Panc1 (cell line): ENCODE measurements at regions of chr11 and their contacts with region 1.

Region 1: GRCh38 chr11:10808553-10809372 is at the start of gene EIF4G2:
- DNase-seq: peak; percentile 99
- ATAC-seq: peak; percentile 96
- H3K4me3 ChIP-seq: peak within 1 kb of the TSS; percentile 83 to 86
- H3K27ac ChIP-seq: peak within 1 kb of the TSS; percentile 96
- H3K4me1 ChIP-seq: peaks cover 35% of the 10 kb centered on the region
- H3K27me3 ChIP-seq: no peaks in the 10 kb centered on the region
- CTCF ChIP-seq: no peak
- total RNA-seq, gene EIF4G2: 2,422 TPM

Region 2: DNA sequence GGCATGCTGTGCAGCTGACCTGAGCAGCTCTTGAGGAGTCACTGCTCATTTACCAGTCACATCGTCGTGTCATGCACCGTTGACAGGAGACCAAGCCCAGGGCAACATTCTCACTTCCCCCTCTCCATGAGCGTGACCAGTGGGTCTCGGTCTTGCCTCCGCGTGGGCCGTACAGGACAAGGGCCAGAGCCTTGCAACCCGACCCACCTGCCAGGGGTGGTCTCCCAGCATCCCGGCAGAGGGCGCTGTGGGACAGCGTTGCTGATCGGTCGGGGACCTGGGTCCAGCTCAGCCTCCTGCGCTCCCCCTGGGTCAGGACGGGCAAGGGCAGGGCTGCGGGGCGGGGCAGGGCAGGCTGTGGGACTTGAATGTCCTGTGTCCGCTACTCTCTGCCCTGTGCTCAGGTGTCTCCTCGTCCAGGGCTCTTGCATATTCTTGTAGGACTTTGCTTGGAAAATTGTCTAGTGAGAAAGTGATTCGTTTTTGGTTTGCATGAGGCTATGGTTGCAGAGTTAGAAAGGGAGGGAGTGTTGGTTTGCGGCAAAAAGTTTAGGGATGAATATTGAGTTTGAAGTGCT is 16.3 kb before region 1 on chr11:
- CTCF ChIA-PET with region 1: interaction called, 17 read pairs
- POLR2A ChIA-PET with region 1: interaction called, 4 read pairs
- in situ Hi-C with region 1: no loop called
- intact Hi-C with region 1: no loop called
- DNase-seq: no peak
- ATAC-seq: peak; percentile 95
- H3K4me3 ChIP-seq: peak overlapping the region in 1 of 2 experiments; percentile 40; a peak in 2 of 4 replicates
- H3K27ac ChIP-seq: peak overlapping the region; percentile 46; the same call in 1 of the 2 replicates
- H3K4me1 ChIP-seq: peaks cover 20% of the 10 kb centered on the region
- H3K27me3 ChIP-seq: no peaks in the 10 kb centered on the region
- CTCF ChIP-seq: peak; percentile 100

Region 3: GRCh38 chr11:10857709-10858438 is 49.1 kb after region 1 on chr11 and contains the start of gene ZBED5:
- CTCF ChIA-PET with region 1: interaction called, 3 read pairs
- POLR2A ChIA-PET with region 1: interaction called, 32 read pairs
- in situ Hi-C with region 1: no loop called
- intact Hi-C with region 1: loop called (anchors 5 kb)
- DNase-seq: peak; percentile 98
- ATAC-seq: peak; percentile 95
- H3K4me3 ChIP-seq: peak within 1 kb of the TSS; percentile 87 to 91
- H3K27ac ChIP-seq: peak within 1 kb of the TSS; percentile 100
- H3K4me1 ChIP-seq: peaks cover 44% of the 10 kb centered on the region
- H3K27me3 ChIP-seq: no peaks in the 10 kb centered on the region
- CTCF ChIP-seq: no peak
- total RNA-seq, gene ZBED5: 114 TPM

Region 4: DNA sequence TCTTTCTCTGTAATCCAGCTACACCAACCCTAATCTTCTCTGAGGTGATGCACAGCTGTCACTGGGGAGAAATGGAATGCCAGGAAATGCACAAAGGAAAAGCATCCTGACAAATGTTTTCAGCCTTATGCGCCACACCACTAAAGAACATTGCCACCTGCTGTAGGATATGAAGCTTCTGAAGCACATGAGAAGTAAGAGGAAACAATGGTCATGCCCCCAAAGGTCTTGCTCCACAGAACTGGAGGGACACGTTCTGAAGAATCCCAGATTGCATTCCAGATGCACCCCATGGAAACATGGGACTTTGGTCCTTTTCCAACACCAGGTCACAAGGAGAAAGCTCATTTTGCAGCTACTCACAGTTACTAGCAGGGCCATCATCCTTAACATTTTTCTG is 97.8 kb after region 1 on chr11:
- CTCF ChIA-PET with region 1: no interaction called
- POLR2A ChIA-PET with region 1: interaction called, 16 read pairs
- in situ Hi-C with region 1: no loop called
- intact Hi-C with region 1: no loop called
- DNase-seq: no peak
- ATAC-seq: peak; percentile 65
- H3K4me3 ChIP-seq: no peak overlapping the region
- H3K27ac ChIP-seq: peak overlapping the region; percentile 75
- H3K4me1 ChIP-seq: peaks cover 20% of the 10 kb centered on the region
- H3K27me3 ChIP-seq: no peaks in the 10 kb centered on the region
- CTCF ChIP-seq: no peak

Region 5: DNA sequence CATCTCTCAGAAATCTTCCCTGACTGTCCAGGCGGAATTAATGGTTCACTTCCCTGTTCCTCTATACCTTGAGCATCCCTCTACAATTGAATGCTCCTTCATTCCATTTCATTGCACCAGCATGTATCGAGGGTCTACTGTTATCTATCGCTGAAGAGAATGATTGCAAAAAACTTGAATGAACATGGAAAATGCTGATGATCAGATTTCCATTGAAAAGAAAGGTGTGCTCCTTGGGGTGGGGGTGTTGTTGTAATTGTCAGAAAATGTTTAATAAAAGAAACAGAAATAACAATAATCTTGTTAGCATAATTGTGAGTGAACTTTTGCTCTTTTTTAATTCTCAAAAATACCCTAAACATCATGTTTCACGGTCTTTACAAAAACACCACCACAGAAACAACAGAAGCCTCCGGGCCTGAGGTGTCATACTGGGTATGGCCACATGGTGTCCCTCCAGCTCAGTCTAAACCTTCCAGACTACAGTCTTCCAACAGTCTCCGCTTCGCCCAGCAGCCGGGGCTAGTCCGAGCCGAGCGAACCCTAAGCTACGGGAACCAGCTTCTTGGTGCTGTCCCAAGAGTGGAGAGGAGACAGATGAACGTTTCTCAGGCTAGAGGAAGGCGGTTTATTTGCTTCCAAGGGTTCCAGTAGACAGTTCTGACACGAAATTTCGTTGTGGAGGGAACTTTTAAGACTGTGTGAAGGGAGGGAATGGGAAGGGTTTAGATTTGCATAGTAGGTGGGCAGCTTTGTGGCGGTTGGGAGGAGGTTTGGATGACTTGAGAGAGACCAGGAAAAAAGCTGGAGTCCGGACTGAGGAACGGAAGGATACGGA is 124.9 kb after region 1 on chr11:
- CTCF ChIA-PET with region 1: interaction called, 11 read pairs
- POLR2A ChIA-PET with region 1: interaction called, 17 read pairs
- in situ Hi-C with region 1: no loop called
- intact Hi-C with region 1: loop called (anchors 5 kb)
- DNase-seq: peak; percentile 96
- ATAC-seq: peak; percentile 77
- H3K4me3 ChIP-seq: peak overlapping the region; percentile 57 to 75
- H3K27ac ChIP-seq: peak overlapping the region; percentile 93
- H3K4me1 ChIP-seq: peaks cover 39% of the 10 kb centered on the region
- H3K27me3 ChIP-seq: no peaks in the 10 kb centered on the region
- CTCF ChIP-seq: peak; percentile 99